GM12878 (cell line): ENCODE measurements at regions of chr7 and their contacts with region 1.

Region 1: DNA sequence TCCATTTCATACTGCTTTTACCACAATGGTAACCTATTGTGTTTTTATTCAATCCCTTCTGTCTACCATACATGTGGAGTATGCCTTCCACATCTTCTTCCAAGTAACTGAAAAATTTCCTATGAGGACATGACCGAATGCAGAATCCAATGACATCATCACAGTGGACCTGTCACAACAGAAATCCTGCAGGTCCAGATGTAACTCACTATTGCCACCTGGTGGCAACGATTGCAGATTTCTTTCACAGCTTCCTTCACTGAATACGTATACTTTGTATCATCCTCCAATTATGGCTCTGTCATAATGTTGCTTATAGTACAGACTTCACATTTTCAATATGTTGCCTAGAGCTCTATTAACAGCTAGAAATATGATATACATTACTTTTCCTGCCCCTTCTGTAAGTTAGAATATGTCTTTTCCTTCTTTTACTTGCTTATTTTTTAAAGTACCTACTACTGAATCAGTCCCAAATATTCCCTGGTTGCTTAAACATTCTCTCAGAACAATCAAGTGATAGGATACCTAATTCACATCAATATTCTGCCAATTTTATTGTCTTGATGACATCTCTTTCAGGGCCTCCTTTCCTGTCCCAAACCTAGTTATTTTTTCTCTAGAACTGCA is 45.4 kb downstream of the SLC13A1 start:
- DNase-seq: peak; percentile 43
- ATAC-seq: peak; percentile 97
- H3K4me3 ChIP-seq: no peak overlapping the region
- H3K27ac ChIP-seq: no peak overlapping the region
- H3K4me1 ChIP-seq: no peaks in the 10 kb centered on the region
- H3K27me3 ChIP-seq: no peaks in the 10 kb centered on the region
- CTCF ChIP-seq: peak; percentile 72 to 80 (median 74)
- EP300 ChIP-seq: no peak
- POLR2A ChIP-seq: no peak
- RAD21 ChIP-seq: peak; percentile 61

Region 2: GRCh38 chr7:122528879-122529481 is 625.4 kb before region 1 on chr7:
- CTCF ChIA-PET with region 1: interaction called, 12 read pairs
- POLR2A ChIA-PET with region 1: no interaction called
- RAD21 ChIA-PET with region 1: interaction called, 5 read pairs
- SMC1A ChIA-PET with region 1: interaction called, 7 read pairs
- in situ Hi-C with region 1: no loop called
- intact Hi-C with region 1: no loop called
- DNase-seq: no peak
- ATAC-seq: peak; percentile 54
- H3K4me3 ChIP-seq: no peak overlapping the region
- H3K27ac ChIP-seq: no peak overlapping the region
- H3K4me1 ChIP-seq: no peaks in the 10 kb centered on the region
- H3K27me3 ChIP-seq: no peaks in the 10 kb centered on the region
- CTCF ChIP-seq: peak in 2 of 3 experiments; percentile 34 to 44; a peak in 4 of 6 replicates
- EP300 ChIP-seq: no peak
- POLR2A ChIP-seq: no peak
- RAD21 ChIP-seq: peak; percentile 39

Region 3: DNA sequence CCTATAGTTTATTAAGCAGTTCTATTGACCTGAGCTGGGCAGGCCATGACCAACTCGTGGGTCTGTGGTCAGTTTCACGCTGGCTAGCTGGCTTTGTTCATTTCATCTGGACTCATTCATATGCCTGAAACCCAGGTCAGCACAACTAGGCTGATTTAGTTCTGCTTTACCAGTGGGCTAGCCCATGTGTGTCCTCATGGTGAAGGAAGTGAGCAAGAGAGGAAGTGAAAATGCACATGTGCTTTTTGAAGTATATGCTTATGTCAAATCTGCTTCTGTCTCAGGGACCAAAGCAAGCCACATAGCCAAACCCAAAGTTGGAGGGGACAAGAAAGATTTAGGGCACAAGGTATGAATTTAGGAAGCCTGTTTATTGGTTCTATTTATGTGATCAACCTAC is 609.9 kb before region 1 on chr7:
- CTCF ChIA-PET with region 1: interaction called, 6 read pairs
- POLR2A ChIA-PET with region 1: no interaction called
- RAD21 ChIA-PET with region 1: interaction called, 4 read pairs
- SMC1A ChIA-PET with region 1: interaction called, 12 read pairs
- in situ Hi-C with region 1: no loop called
- intact Hi-C with region 1: loop called (anchors 5 kb)
- DNase-seq: peak; percentile 49
- ATAC-seq: peak; percentile 99
- H3K4me3 ChIP-seq: no peak overlapping the region
- H3K27ac ChIP-seq: no peak overlapping the region
- H3K4me1 ChIP-seq: peaks cover 2% of the 10 kb centered on the region; the same call in 1 of the 2 replicates
- H3K27me3 ChIP-seq: no peaks in the 10 kb centered on the region
- CTCF ChIP-seq: no peak
- EP300 ChIP-seq: peak in 1 of 2 experiments; percentile 81; a peak in 2 of 4 replicates
- POLR2A ChIP-seq: no peak
- RAD21 ChIP-seq: no peak

Region 4: DNA sequence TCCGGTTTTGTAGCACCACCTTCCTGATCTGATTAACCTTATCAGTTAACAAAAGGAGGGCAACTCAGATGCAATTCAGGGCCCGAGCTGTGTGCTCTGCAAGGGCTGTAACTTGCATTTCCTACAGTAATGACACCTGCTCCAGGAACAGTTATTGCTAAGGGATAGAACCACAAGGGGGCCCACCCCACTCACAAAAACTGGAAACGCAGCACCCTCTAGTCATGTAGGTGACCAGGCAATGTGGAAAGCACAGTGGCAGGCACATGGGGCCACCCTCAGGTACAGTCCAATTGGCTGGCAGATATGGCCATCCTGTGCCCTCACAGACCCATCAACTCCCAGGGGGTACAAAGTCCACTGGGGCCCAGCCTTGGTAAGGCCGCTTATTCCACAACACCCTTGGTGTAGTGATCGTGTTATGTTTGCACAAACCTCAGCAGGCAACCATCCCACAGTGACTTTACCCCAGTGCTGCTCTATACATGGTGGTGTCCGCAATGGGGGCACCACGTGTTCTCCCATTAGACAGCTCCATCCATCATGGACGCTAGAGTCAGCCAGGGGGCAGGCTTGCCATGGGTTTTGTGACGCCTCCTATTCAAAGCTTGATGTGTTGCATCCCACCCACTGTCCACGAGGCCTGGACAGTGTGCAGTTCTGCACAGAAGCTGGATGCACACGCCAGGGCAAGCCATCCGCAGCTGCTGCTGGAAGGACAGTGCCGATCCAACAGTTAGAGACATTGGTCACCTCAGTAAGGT is 464.8 kb before region 1 on chr7:
- CTCF ChIA-PET with region 1: interaction called, 16 read pairs
- POLR2A ChIA-PET with region 1: no interaction called
- RAD21 ChIA-PET with region 1: no interaction called
- SMC1A ChIA-PET with region 1: interaction called, 7 read pairs
- in situ Hi-C with region 1: no loop called
- intact Hi-C with region 1: loop called (anchors 5 kb)
- DNase-seq: no peak
- ATAC-seq: peak; percentile 55
- H3K4me3 ChIP-seq: no peak overlapping the region
- H3K27ac ChIP-seq: no peak overlapping the region
- H3K4me1 ChIP-seq: no peaks in the 10 kb centered on the region
- H3K27me3 ChIP-seq: no peaks in the 10 kb centered on the region
- CTCF ChIP-seq: peak in 1 of 3 experiments; percentile 1; a peak in 1 of 6 replicates
- EP300 ChIP-seq: no peak
- POLR2A ChIP-seq: no peak
- RAD21 ChIP-seq: no peak

Region 5: DNA sequence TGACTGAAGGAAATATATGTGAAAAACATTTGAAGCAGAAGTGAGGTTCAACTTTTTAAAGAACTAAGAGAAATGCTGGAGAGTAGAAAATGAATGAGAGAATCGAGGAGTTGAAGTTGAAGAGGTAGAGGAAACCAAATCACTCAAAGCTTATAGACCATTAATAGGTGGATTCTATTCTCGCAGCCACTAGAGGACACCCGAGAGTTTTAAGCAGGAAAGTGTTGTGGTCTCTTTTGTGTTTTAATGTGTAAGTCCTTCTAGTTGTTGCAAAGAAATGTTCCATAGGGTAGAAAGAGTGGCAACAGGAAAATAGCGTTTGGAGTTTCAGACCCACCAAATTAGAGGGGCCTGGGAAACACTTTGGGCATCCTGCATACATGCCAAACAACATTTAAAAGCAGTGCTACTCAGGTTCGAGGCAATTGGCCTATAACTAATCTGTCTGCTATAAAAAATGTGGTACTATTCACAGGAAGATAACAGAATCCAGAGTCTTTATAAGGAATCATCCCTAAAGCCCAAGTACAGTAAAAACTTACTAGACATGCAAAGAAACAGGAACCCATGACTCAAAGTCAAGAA is 83.6 kb before region 1 on chr7:
- CTCF ChIA-PET with region 1: interaction called, 45 read pairs
- POLR2A ChIA-PET with region 1: no interaction called
- RAD21 ChIA-PET with region 1: interaction called, 13 read pairs
- SMC1A ChIA-PET with region 1: interaction called, 7 read pairs
- in situ Hi-C with region 1: no loop called
- intact Hi-C with region 1: loop called (anchors 1 kb)
- DNase-seq: no peak
- ATAC-seq: peak; percentile 81
- H3K4me3 ChIP-seq: no peak overlapping the region
- H3K27ac ChIP-seq: no peak overlapping the region
- H3K4me1 ChIP-seq: no peaks in the 10 kb centered on the region
- H3K27me3 ChIP-seq: no peaks in the 10 kb centered on the region
- CTCF ChIP-seq: peak; percentile 61 to 74 (median 71)
- EP300 ChIP-seq: no peak
- POLR2A ChIP-seq: no peak
- RAD21 ChIP-seq: peak; percentile 80

Region 6: DNA sequence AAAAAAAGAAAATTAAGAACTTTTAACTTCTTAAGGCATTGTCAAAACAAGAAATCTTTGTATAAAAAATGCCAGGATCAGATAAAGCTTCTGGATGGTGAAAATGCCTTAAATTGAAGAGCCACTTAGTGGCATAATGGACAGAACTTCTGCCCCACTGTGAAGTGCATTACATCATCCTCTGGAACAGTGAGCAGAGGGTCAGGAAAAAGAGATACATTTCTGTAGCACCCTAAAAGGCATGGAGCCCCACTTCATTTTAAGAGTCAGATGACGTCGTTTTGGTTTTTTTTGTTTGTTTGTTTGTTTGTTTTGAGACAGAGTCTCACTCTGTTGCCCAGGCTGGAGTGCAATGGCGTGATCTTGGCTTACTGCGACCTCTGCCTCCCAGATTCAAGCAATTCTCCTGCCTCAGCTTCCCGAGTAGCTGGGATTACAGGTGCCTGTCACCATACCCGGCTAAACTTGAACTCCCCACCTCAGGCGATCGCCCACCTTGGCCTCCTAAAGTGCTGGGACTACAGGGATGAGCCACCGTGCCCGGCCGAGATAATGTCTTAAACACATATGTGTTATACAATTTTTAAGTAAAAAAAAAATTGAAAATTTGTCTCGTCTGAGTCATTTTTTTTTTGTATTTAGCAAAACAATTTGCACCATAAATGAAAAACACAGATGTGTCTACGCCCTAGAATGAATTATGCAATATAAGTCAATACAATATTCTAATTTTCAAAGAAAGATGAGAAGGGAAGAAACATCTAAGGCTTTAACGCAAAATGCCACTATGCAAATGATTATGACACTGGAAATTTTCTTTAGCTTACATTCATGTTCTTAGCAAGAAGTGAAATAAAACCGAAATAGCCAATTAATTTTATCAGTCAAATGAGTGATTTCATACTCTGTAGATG is 16.2 kb after region 1 on chr7:
- CTCF ChIA-PET with region 1: interaction called, 42 read pairs
- POLR2A ChIA-PET with region 1: interaction called, 3 read pairs
- RAD21 ChIA-PET with region 1: interaction called, 3 read pairs
- SMC1A ChIA-PET with region 1: interaction called, 8 read pairs
- in situ Hi-C with region 1: no loop called
- intact Hi-C with region 1: no loop called
- DNase-seq: no peak
- ATAC-seq: no peak
- H3K4me3 ChIP-seq: no peak overlapping the region
- H3K27ac ChIP-seq: no peak overlapping the region
- H3K4me1 ChIP-seq: no peaks in the 10 kb centered on the region
- H3K27me3 ChIP-seq: no peaks in the 10 kb centered on the region
- CTCF ChIP-seq: no peak
- EP300 ChIP-seq: no peak
- POLR2A ChIP-seq: no peak
- RAD21 ChIP-seq: no peak

Region 7: DNA sequence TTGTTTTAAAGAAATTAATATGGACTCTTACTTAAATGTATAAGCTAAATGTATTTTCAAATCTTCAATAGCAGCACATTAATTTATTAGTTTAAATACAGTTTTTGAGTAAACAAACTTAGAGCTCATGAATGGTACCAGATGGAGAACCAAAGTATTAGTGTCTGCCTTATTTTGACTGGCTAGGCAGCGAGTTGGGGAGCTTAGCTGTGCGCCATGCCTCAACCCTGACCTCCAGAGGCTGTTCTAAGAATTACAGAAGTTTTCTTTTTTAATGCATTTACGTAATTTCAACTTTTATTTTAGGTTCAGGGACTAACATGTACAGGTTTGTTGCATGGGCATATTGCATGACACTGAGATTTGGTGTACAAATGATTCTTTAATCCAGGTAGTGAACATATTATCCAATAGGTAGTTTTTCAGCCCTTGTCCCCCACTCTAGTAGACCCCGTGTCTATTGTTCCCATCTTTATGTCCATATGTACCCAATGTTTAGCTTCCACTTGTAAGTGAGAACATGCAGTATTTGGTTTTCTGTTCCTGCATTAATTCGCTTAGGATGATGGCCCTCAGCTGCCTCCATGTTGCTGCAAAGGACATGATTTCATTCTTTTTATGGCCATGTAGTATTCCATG is 213.3 kb after region 1 on chr7:
- CTCF ChIA-PET with region 1: interaction called, 67 read pairs
- POLR2A ChIA-PET with region 1: no interaction called
- RAD21 ChIA-PET with region 1: interaction called, 59 read pairs
- SMC1A ChIA-PET with region 1: interaction called, 46 read pairs
- in situ Hi-C with region 1: no loop called
- intact Hi-C with region 1: loop called (anchors 5 kb)
- DNase-seq: peak; percentile 15
- ATAC-seq: peak; percentile 88
- H3K4me3 ChIP-seq: no peak overlapping the region
- H3K27ac ChIP-seq: no peak overlapping the region
- H3K4me1 ChIP-seq: no peaks in the 10 kb centered on the region
- H3K27me3 ChIP-seq: no peaks in the 10 kb centered on the region
- CTCF ChIP-seq: peak; percentile 74 to 84 (median 77)
- EP300 ChIP-seq: no peak
- POLR2A ChIP-seq: no peak
- RAD21 ChIP-seq: peak; percentile 81